Upper lobe of right lung (tissue), 1 donor: ENCODE measurements at regions of chr2 and their contacts with region 1.

Region 1: DNA sequence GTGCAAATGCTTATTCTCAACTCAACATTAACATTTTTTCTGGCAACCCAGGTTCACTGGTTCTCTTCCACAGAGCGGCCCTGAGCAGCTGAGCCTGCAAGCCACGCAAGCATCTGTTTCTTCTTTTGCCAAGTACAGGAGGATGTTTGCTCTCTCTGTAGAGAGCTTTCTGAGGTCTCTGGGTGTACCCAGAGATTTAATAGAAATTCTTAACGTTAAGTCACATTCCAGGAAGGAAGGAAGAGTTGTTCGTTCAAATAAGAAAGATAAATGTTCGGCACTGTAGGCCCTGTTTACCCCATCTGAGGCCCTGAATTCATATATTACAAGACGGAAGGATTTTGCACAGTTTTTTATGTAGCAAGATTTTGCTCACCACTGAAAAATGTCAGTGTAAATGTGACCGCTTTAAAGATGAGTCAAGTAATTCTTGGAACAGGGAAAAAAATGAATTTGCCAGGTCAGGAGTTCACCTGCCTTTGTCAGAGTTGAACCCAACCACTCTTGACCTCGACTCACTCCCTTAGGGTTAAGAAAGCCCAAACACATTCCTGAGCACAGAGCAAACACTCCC is 30.1 kb downstream of the KCTD18 start:
- DNase-seq: no peak
- ATAC-seq: peak; percentile 51
- H3K4me3 ChIP-seq: no peak overlapping the region
- H3K27ac ChIP-seq: no peak overlapping the region
- H3K4me1 ChIP-seq: no peaks in the 10 kb centered on the region
- H3K27me3 ChIP-seq: no peaks in the 10 kb centered on the region
- CTCF ChIP-seq: no peak

Region 2: GRCh38 chr2:199979832-199980628 is 499.7 kb before region 1 on chr2:
- intact Hi-C with region 1: loop called (anchors 5 kb)
- DNase-seq: peak; percentile 86
- ATAC-seq: peak; percentile 85
- H3K4me3 ChIP-seq: no peak overlapping the region
- H3K27ac ChIP-seq: no peak overlapping the region
- H3K4me1 ChIP-seq: peaks cover 4% of the 10 kb centered on the region
- H3K27me3 ChIP-seq: no peaks in the 10 kb centered on the region
- CTCF ChIP-seq: peak; percentile 89

Region 3: DNA sequence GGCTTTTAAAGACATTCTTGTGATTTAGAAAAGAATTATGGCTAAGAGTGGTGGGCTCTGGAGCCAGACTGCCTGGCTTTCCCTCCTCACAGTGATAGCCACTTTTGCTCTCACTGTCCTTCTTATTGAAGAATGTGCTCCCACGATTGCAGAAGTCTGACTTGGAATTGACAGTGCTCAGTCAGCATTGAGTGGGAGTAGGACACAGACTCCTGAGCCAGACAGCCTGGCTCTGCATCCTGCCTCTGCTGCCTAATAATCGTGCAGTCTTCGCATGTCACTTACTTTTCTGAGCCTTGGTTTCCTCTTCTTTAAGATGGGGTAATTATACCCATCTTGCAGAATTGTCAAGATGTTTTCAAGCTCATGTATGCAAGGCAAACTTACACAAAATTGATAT is 150.0 kb before region 1 on chr2:
- intact Hi-C with region 1: no loop called
- DNase-seq: no peak
- ATAC-seq: peak; percentile 58
- H3K4me3 ChIP-seq: no peak overlapping the region
- H3K27ac ChIP-seq: no peak overlapping the region
- H3K4me1 ChIP-seq: peaks cover 8% of the 10 kb centered on the region
- H3K27me3 ChIP-seq: no peaks in the 10 kb centered on the region
- CTCF ChIP-seq: no peak